ENCODE measurements at regions of chr5 and their contacts with region 1.

Region 1: GRCh38 chr5:17189381-17190036 is 27.9 kb upstream of the BASP1 start:
- DNase-seq: peak in 2 of 3 donors; percentile 75 to 96
- ATAC-seq: peak; percentile 76
- H3K4me3 ChIP-seq: no peak overlapping the region
- H3K4me1 ChIP-seq: peaks cover 25% of the 10 kb centered on the region
- CTCF ChIP-seq: peak; percentile 55

Region 2: DNA sequence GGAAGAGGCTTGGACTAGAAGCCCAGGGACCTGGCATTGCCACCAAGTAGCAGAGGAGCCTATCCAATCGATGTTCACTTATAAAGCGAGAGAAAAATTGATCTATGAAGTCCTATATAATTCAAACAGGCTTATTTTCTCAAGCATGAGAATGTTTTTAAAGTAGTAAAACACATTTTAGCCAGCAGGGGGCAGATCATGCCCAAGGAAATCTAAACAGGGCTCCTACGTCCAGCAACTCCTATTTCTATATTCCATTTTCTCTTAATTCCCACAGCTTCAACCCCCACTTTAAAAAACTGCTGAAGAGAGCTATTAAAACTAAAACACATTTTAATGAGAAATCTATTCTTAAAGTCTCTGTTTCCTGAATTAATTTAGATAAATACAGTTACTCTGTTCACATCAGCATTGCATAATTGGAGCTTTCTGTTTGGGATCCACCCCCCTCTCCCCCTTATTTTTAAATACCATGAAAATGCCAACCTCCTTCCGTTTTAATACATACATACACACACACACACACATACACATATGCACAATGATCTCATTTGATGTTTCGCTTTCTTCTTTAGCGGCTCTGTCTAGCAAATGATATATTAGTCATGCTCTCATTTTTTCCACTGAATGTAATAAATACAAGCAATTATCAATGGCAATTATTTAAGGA is 398.3 kb before region 1 on chr5:
- intact Hi-C with region 1: loop called (anchors 5 kb)
- DNase-seq: peak in 1 of 3 donors; percentile 72
- ATAC-seq: peak; percentile 66
- H3K4me3 ChIP-seq: no peak overlapping the region
- H3K4me1 ChIP-seq: peaks cover 2% of the 10 kb centered on the region
- CTCF ChIP-seq: peak; percentile 12

Region 3: GRCh38 chr5:16934123-16934522 is 255.4 kb before region 1 on chr5:
- intact Hi-C with region 1: loop called in 1 of 2 experiments (anchors 10 kb)
- DNase-seq: peak in 2 of 3 donors; percentile 80 to 83
- ATAC-seq: peak; percentile 43
- H3K4me3 ChIP-seq: peak overlapping the region; percentile 12
- H3K4me1 ChIP-seq: peaks cover 26% of the 10 kb centered on the region
- CTCF ChIP-seq: peak; percentile 70

Measured in mucosa of descending colon (tissue), 3 donors.